ENCODE measurements at regions of chr3 and their contacts with region 1.

Region 1: GRCh38 chr3:122265957-122266356 is 59.1 kb upstream of the CSTA start:
- DNase-seq: no peak
- ATAC-seq: peak; percentile 11; the same call in 2 of the 3 replicates
- H3K4me3 ChIP-seq: no peak overlapping the region
- H3K27ac ChIP-seq: peak overlapping the region; percentile 43; the same call in 1 of the 2 replicates
- H3K4me1 ChIP-seq: peaks cover 26% of the 10 kb centered on the region
- H3K27me3 ChIP-seq: no peaks in the 10 kb centered on the region
- CTCF ChIP-seq: 0 out of 6 replicates have a peak, but pooled peaks of 1 of the 3 experiments have one; percentile 3
- EP300 ChIP-seq: 0 out of 4 replicates have a peak, but pooled peaks of 1 of the 2 experiments have one; percentile 11
- POLR2A ChIP-seq: no peak
- RAD21 ChIP-seq: peak; percentile 38; the same call in 1 of the 2 replicates

Region 2: DNA sequence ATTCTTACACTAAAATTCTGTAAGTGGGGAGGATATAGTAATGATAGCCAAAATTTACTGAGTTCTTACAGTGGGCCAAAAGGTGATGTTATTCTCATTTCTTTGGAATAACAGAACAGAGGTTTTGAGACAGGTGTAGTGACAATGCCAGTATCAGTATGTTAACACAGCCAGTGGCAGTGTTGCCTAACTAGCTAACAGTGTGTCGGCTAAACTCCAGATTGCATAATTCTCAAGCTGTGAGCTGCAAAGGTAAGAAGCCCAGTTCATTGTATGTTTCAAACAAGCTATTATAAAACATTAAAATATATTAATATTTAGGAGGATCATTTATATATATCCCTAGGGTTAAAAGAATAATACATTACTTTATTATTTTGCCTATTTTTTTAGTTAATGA is 370.8 kb before region 1 on chr3:
- CTCF ChIA-PET with region 1: no interaction called
- POLR2A ChIA-PET with region 1: no interaction called
- RAD21 ChIA-PET with region 1: no interaction called
- SMC1A ChIA-PET with region 1: no interaction called
- in situ Hi-C with region 1: no loop called
- intact Hi-C with region 1: no loop called
- DNase-seq: no peak
- ATAC-seq: no peak
- H3K4me3 ChIP-seq: no peak overlapping the region
- H3K27ac ChIP-seq: no peak overlapping the region
- H3K4me1 ChIP-seq: no peaks in the 10 kb centered on the region
- H3K27me3 ChIP-seq: no peaks in the 10 kb centered on the region
- CTCF ChIP-seq: no peak
- EP300 ChIP-seq: no peak
- POLR2A ChIP-seq: no peak
- RAD21 ChIP-seq: no peak

Region 3: GRCh38 chr3:122294365-122294764 is 28.4 kb after region 1 on chr3:
- CTCF ChIA-PET with region 1: interaction called, 37 read pairs
- POLR2A ChIA-PET with region 1: interaction called, 8 read pairs
- RAD21 ChIA-PET with region 1: interaction called, 29 read pairs
- SMC1A ChIA-PET with region 1: interaction called, 204 read pairs
- in situ Hi-C with region 1: no loop called
- intact Hi-C with region 1: loop called (anchors 1 kb)
- DNase-seq: no peak
- ATAC-seq: no peak
- H3K4me3 ChIP-seq: no peak overlapping the region
- H3K27ac ChIP-seq: no peak overlapping the region
- H3K4me1 ChIP-seq: peaks cover 34% of the 10 kb centered on the region
- H3K27me3 ChIP-seq: no peaks in the 10 kb centered on the region
- CTCF ChIP-seq: no peak
- EP300 ChIP-seq: no peak
- POLR2A ChIP-seq: no peak
- RAD21 ChIP-seq: no peak

Region 4: DNA sequence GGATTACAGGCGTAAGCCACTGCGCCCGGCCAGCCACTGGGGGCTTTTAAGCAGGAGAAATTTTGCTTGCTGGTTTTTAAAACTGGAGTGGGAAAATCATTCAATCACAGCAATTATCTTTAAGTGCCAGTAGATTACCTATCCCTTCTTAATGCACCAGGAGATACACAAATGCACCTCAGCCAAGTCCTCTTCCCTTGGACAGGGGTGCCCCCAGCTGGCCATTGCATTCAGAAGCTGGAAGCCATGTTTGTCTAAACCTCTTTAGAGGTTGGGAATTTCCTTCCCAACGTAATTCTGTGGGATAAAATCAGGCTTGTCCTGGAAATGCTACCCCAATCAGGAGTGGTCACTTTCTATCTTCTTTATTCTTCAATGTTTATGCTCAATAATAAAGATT is 90.5 kb after region 1 on chr3:
- CTCF ChIA-PET with region 1: interaction called, 5 read pairs
- POLR2A ChIA-PET with region 1: interaction called, 3 read pairs
- RAD21 ChIA-PET with region 1: no interaction called
- SMC1A ChIA-PET with region 1: interaction called, 6 read pairs
- in situ Hi-C with region 1: no loop called
- intact Hi-C with region 1: loop called (anchors 2 kb)
- DNase-seq: no peak
- ATAC-seq: peak; percentile 72
- H3K4me3 ChIP-seq: no peak overlapping the region
- H3K27ac ChIP-seq: no peak overlapping the region
- H3K4me1 ChIP-seq: no peaks in the 10 kb centered on the region
- H3K27me3 ChIP-seq: no peaks in the 10 kb centered on the region
- CTCF ChIP-seq: peak; percentile 49 to 80 (median 51); a peak in 4 of 6 replicates
- EP300 ChIP-seq: no peak
- POLR2A ChIP-seq: no peak
- RAD21 ChIP-seq: peak; percentile 93

Region 5: GRCh38 chr3:122468896-122469533 is 203.1 kb after region 1 on chr3:
- CTCF ChIA-PET with region 1: no interaction called
- POLR2A ChIA-PET with region 1: no interaction called
- RAD21 ChIA-PET with region 1: no interaction called
- SMC1A ChIA-PET with region 1: no interaction called
- in situ Hi-C with region 1: no loop called
- intact Hi-C with region 1: no loop called
- DNase-seq: peak; percentile 30
- ATAC-seq: peak; percentile 88
- H3K4me3 ChIP-seq: no peak overlapping the region
- H3K27ac ChIP-seq: peak overlapping the region; percentile 53
- H3K4me1 ChIP-seq: peaks cover 16% of the 10 kb centered on the region
- H3K27me3 ChIP-seq: no peaks in the 10 kb centered on the region
- CTCF ChIP-seq: no peak
- EP300 ChIP-seq: no peak; a peak in 1 of 4 replicates
- POLR2A ChIP-seq: no peak
- RAD21 ChIP-seq: no peak